ENCODE measurements at regions of chr16 and their contacts with region 1.

Region 1: DNA sequence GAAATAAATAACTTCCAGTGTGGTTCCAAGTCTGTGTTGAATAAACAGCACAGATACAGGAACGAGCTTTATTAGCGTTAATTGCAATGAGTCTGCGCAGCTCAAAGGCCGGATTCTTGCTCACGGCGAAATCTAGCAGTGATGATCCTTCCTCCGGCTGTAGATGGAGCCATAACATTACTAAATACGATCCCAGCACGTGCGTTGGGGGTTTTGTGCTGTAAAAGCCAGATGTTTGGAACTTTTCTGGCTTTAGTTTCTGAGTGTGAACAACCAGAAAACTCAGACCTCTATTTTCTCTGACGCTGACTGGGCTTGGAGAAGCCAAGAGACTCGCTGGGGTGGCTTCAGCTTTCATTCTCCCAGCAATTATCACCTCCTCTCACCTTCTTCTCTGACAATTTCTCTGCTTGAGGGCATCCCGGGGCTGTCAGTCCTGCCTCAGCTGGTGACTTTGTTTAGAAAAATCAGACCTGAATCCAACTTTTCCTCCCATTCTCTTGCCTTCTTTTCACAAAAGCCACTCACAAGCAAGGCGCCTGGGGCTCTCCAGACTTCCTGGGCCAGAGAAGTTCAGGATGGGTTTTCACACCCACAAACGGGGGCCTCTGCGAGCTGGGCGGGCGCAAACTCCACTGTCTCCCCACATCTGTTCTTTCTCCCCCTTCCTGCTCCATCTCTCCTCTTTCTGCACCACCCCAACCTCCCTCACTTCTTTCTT is 47.1 kb upstream of the AKTIP start:
- DNase-seq: peak; percentile 83
- H3K4me3 ChIP-seq: no peak overlapping the region
- H3K27ac ChIP-seq: no peak overlapping the region
- H3K4me1 ChIP-seq: peaks cover 3% of the 10 kb centered on the region
- H3K27me3 ChIP-seq: peaks cover 5 to 6% of the 10 kb centered on the region in 2 experiments
- CTCF ChIP-seq: peak; percentile 69 to 88
- POLR2A ChIP-seq: no peak

Region 2: GRCh38 chr16:53509906-53510703 is 40.0 kb before region 1 on chr16:
- CTCF ChIA-PET with region 1: interaction called, 18 read pairs
- POLR2A ChIA-PET with region 1: no interaction called
- dilution Hi-C with region 1: no loop called
- intact Hi-C with region 1: loop called (anchors 1 kb)
- DNase-seq: peak; percentile 85
- H3K4me3 ChIP-seq: peak overlapping the region in 1 of 3 experiments; percentile 16
- H3K27ac ChIP-seq: peak overlapping the region; percentile 87
- H3K4me1 ChIP-seq: peaks cover 17% of the 10 kb centered on the region
- H3K27me3 ChIP-seq: no peaks in the 10 kb centered on the region
- CTCF ChIP-seq: peak; percentile 87 to 89
- POLR2A ChIP-seq: no peak

Region 3: GRCh38 chr16:53588081-53588648 is 38.0 kb after region 1 on chr16:
- CTCF ChIA-PET with region 1: no interaction called
- POLR2A ChIA-PET with region 1: no interaction called
- dilution Hi-C with region 1: no loop called
- intact Hi-C with region 1: no loop called
- DNase-seq: no peak
- H3K4me3 ChIP-seq: no peak overlapping the region
- H3K27ac ChIP-seq: no peak overlapping the region
- H3K4me1 ChIP-seq: no peaks in the 10 kb centered on the region
- H3K27me3 ChIP-seq: peaks cover 0 to 2% of the 10 kb centered on the region in 2 experiments
- CTCF ChIP-seq: no peak
- POLR2A ChIP-seq: no peak

Region 4: GRCh38 chr16:53600126-53600525 is 50.0 kb after region 1 on chr16:
- CTCF ChIA-PET with region 1: no interaction called
- POLR2A ChIA-PET with region 1: no interaction called
- dilution Hi-C with region 1: no loop called
- intact Hi-C with region 1: no loop called
- DNase-seq: no peak
- H3K4me3 ChIP-seq: no peak overlapping the region
- H3K27ac ChIP-seq: no peak overlapping the region
- H3K4me1 ChIP-seq: no peaks in the 10 kb centered on the region
- H3K27me3 ChIP-seq: no peaks in the 10 kb centered on the region
- CTCF ChIP-seq: no peak
- POLR2A ChIP-seq: no peak

Region 5: DNA sequence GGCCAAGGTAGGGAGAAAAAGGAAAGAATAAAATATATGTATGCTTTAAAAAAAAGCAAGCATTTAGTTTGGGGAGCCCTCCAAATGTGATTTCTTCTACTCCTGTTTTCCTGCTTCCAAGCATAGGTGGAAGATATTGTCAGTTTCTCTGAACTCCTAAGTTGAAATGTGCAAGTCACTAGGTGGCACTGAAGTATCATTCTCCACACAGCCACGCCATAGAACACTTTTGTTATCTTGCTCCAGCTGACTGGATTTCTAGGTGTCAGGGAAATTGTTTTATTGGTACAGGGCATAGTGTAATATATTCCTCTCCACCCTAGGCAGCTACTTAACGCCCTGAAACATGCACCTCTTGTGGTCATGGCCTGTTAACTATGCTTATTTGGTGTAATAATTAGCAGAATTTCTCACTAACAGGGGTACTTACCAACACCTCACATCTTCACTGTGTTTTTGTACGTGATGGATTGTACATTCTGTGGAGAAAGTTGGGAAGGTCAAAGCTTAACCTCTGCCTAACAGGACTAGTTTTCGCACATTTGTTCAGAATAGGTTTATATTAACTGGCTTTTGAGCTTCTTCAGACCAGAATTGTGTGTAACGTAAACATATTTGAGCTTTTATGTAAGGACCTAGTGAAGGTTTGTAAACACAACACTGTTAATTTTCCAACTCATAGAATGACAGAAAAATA is 223.2 kb after region 1 on chr16:
- CTCF ChIA-PET with region 1: interaction called, 10 read pairs
- POLR2A ChIA-PET with region 1: no interaction called
- dilution Hi-C with region 1: no loop called
- intact Hi-C with region 1: loop called (anchors 1 kb)
- DNase-seq: peak; percentile 79
- H3K4me3 ChIP-seq: no peak overlapping the region
- H3K27ac ChIP-seq: no peak overlapping the region
- H3K4me1 ChIP-seq: peaks cover 7% of the 10 kb centered on the region
- H3K27me3 ChIP-seq: no peaks in the 10 kb centered on the region
- CTCF ChIP-seq: peak; percentile 35 to 56
- POLR2A ChIP-seq: no peak

Region 6: DNA sequence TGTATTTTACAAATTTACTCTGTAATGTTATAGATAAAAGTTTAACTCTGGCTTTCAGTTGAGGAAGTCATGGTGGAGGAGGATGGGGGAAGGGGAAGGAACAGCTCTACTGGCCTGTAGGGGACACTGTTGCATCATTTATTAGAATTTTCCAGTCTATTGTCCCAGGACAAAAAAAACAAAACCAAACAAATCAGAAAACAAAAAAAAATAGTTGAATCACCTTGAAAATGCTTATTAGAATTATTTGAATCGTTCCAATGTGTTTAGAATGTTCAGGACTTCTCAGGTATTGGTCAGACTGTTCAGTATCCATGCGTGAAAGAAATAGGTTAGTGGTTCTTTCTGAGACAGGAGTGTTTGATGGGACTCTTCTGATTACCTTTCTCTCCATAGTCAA is 395.9 kb after region 1 on chr16:
- CTCF ChIA-PET with region 1: interaction called, 8 read pairs
- POLR2A ChIA-PET with region 1: no interaction called
- dilution Hi-C with region 1: no loop called
- intact Hi-C with region 1: loop called (anchors 5 kb)
- DNase-seq: peak; percentile 58
- H3K4me3 ChIP-seq: no peak overlapping the region
- H3K27ac ChIP-seq: no peak overlapping the region
- H3K4me1 ChIP-seq: no peaks in the 10 kb centered on the region
- H3K27me3 ChIP-seq: no peaks in the 10 kb centered on the region
- CTCF ChIP-seq: peak; percentile 55 to 69
- POLR2A ChIP-seq: no peak

Region 7: DNA sequence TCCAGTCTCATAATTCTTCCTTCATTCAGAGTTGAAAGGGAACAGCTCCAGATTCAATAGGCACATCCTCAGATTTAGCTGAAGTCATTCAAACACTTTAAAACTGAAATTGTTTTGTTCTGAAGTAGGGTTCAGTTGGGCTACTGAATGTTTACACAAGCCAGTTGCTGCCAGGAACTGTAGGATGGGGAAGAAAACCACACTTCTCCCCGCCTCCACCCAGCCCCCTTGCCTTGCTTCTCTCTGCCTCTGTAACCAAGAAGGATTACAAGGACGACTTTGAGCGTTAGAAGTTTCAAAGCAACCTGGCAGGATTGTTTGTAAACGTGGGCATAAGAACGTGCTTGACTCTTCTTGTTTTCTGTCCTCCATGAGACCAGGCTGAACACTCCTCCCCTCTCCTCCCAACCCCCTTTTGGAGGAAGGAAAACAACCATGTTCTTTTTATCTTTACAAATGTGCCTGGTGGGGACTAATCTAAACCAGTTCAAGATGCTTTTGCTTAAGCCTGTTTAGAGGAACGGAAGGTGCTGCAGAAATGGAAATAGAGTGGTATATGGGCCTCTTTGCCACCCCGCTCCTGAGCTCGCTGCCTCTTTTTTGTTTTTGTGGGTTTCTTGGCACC is 441.7 kb after region 1 on chr16:
- CTCF ChIA-PET with region 1: no interaction called
- POLR2A ChIA-PET with region 1: no interaction called
- dilution Hi-C with region 1: no loop called
- intact Hi-C with region 1: no loop called
- DNase-seq: peak; percentile 14
- H3K4me3 ChIP-seq: no peak overlapping the region
- H3K27ac ChIP-seq: no peak overlapping the region
- H3K4me1 ChIP-seq: no peaks in the 10 kb centered on the region
- H3K27me3 ChIP-seq: no peaks in the 10 kb centered on the region
- CTCF ChIP-seq: no peak
- POLR2A ChIP-seq: no peak

Region 8: DNA sequence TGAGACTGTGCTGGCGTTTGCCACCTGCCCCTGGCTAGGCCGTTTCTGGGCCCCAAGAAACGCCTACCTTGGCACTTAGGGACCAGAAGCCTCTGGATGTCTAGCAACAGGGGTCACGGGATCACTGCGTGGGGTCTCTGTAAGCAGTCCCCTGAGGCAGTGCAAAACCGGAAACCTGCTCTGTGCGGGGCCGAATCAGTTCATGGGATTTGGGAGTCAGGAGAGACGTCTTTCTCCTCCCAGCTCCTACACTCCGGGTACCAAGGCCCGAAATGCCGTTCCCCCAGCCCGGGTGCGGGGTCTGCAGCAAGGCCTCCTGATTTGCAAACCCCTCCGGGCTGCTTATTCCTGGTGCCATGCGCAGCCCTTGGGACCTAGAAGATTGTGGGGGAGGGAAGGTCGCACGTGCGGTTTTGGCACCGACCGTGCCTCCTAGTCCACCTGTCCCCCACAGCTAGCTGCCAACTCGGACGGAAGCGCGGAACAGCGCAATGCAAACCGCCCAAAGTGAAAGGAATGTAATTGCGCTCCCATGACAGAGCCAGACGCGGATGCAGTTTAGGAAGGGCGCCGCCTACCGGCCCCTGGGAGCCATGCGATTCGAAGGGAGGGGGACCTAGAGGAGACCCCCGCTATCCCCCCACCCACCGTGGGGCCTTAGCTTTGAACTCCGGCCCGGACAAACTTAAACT is 1387.0 kb after region 1 on chr16:
- CTCF ChIA-PET with region 1: interaction called, 3 read pairs
- POLR2A ChIA-PET with region 1: no interaction called
- dilution Hi-C with region 1: no loop called
- intact Hi-C with region 1: loop called (anchors 2 kb)
- DNase-seq: peak; percentile 24
- H3K4me3 ChIP-seq: no peak overlapping the region
- H3K27ac ChIP-seq: no peak overlapping the region
- H3K4me1 ChIP-seq: peaks cover 4% of the 10 kb centered on the region
- H3K27me3 ChIP-seq: peaks cover 87 to 95% of the 10 kb centered on the region in 2 experiments
- CTCF ChIP-seq: peak; percentile 61 to 66
- POLR2A ChIP-seq: no peak

Measured in endothelial cell of umbilical vein (primary cell).